CD8-positive, alpha-beta T cell (primary cell): ENCODE measurements at regions of chr6 and their contacts with region 1.

Region 1: GRCh38 chr6:14117158-14118090 is at the start of gene CD83:
- DNase-seq: peak; percentile 72 to 97 (median 84)
- ATAC-seq: peak; percentile 94
- H3K4me3 ChIP-seq: peak within 1 kb of the TSS; percentile 90 to 92
- H3K4me3 Mint-ChIP-seq: peak within 1 kb of the TSS; percentile 93
- H3K27ac ChIP-seq: peak within 1 kb of the TSS; percentile 66 to 81
- H3K27ac Mint-ChIP-seq: peak within 1 kb of the TSS; percentile 96
- H3K4me1 ChIP-seq: peaks cover 8% of the 10 kb centered on the region
- H3K4me1 Mint-ChIP-seq: peaks cover 39% of the 10 kb centered on the region
- H3K27me3 ChIP-seq: no peaks in the 10 kb centered on the region
- H3K27me3 Mint-ChIP-seq: no peaks in the 10 kb centered on the region
- CTCF ChIP-seq: no peak
- total RNA-seq, gene CD83: 57.2 to 60.4 TPM

Region 2: DNA sequence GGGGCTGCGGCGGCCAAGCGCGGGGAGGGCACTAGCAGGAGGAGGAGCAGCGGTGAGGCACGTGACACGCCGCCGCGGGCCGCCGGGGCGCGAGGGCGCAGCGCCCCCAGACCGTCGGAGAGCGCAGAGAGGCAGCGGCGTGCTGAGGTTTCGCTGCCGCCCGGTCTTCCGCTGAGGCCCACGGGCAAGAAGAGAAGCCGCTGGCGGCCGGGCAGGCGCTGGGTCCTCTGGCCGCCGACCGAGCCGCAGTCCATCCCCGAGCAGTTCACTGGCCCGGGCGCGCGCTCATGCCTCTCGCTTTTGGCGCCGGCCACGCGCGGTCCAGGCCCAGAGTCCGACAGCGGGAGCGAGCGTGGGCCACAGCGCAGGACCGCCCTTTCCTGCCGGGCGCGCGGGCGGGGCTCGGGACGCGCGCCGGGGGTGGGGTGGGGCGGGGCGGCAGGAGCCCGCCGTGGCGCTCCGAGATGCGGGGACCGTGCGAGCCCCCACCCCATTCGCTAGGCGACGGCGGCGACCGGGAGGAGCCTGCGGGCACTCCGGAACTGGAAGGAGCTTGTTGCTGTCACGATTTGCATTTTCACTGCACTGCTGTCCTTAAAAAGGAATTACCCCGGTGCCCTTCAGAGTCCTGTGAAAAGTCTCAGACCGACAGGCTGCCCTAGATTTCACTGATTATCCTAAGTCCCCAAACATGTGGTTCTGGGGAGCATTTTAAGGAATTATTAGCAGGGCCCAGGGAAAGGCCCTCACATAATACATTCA is 303.1 kb before region 1 on chr6 and contains the start of gene MCUR1:
- CTCF ChIA-PET with region 1: no interaction called
- POLR2A ChIA-PET with region 1: no interaction called
- intact Hi-C with region 1: loop called (anchors 1 to 2 kb)
- DNase-seq: peak; percentile 51 to 92 (median 74)
- ATAC-seq: peak; percentile 80
- H3K4me3 ChIP-seq: peak within 1 kb of the TSS; percentile 71
- H3K4me3 Mint-ChIP-seq: peak within 1 kb of the TSS; percentile 87
- H3K27ac ChIP-seq: peak within 1 kb of the TSS; percentile 61 to 76
- H3K27ac Mint-ChIP-seq: peak within 1 kb of the TSS; percentile 85
- H3K4me1 ChIP-seq: peaks cover 14% of the 10 kb centered on the region
- H3K4me1 Mint-ChIP-seq: peaks cover 34% of the 10 kb centered on the region
- H3K27me3 ChIP-seq: no peaks in the 10 kb centered on the region
- H3K27me3 Mint-ChIP-seq: no peaks in the 10 kb centered on the region
- CTCF ChIP-seq: no peak
- total RNA-seq, gene MCUR1: 2.1 to 3.4 TPM

Region 3: DNA sequence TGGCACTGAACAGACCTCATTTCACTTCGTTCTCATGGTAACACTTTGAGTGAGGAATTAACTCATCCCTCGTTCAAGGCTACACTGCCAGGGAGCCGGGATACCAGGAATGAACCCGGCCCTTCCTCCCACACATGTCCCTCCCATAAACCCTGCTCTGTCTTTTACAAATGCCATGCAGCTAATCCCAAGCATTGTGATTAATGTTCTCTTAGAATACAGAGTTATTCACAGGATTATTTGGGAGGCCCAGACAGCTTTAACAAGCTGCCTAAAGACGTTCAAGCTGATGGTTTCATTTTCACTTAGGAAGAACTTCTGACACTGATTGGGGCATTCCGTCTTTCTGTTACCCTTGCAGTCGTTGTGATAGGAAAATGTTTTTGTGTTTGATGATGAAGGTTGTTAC is 42.3 kb before region 1 on chr6:
- CTCF ChIA-PET with region 1: no interaction called
- POLR2A ChIA-PET with region 1: no interaction called
- intact Hi-C with region 1: loop called in 1 of 2 experiments (anchors 5 kb)
- DNase-seq: peak in 3 of 9 experiments; percentile 54 to 85 (median 70)
- ATAC-seq: peak; percentile 94
- H3K4me3 ChIP-seq: peak overlapping the region; percentile 41 to 45
- H3K4me3 Mint-ChIP-seq: peak overlapping the region; percentile 82
- H3K27ac ChIP-seq: peak overlapping the region; percentile 51 to 80
- H3K27ac Mint-ChIP-seq: peak overlapping the region; percentile 94
- H3K4me1 ChIP-seq: peaks cover 10% of the 10 kb centered on the region
- H3K4me1 Mint-ChIP-seq: peaks cover 22% of the 10 kb centered on the region
- H3K27me3 ChIP-seq: no peaks in the 10 kb centered on the region
- H3K27me3 Mint-ChIP-seq: no peaks in the 10 kb centered on the region
- CTCF ChIP-seq: no peak

Region 4: DNA sequence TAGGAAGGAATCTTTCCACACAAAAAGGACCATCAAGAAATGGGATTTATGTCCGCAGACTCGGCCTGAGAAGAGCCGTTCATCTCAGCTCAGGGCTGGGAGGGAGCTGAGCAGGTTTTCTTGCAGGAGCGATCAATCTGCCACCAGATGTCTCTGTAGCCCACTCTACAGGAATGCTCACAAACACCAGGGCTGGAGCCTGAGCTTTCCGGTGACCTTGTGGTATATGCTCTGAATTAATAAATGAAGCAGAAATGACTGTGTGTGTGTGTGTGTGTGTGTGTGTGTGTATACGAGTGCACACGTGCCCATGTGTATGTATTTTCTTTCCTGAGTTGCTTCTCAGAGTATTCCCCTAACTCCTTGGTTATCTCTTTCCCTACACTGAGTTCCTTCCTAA is 12.2 kb after region 1 on chr6:
- CTCF ChIA-PET with region 1: interaction called, 10 read pairs
- POLR2A ChIA-PET with region 1: interaction called, 5 read pairs
- intact Hi-C with region 1: no loop called
- DNase-seq: peak in 7 of 9 experiments; percentile 11 to 66 (median 38)
- ATAC-seq: peak; percentile 55
- H3K4me3 ChIP-seq: no peak overlapping the region
- H3K4me3 Mint-ChIP-seq: no peak overlapping the region
- H3K27ac ChIP-seq: no peak overlapping the region
- H3K27ac Mint-ChIP-seq: no peak overlapping the region
- H3K4me1 ChIP-seq: no peaks in the 10 kb centered on the region
- H3K4me1 Mint-ChIP-seq: peaks cover 11% of the 10 kb centered on the region
- H3K27me3 ChIP-seq: no peaks in the 10 kb centered on the region
- H3K27me3 Mint-ChIP-seq: no peaks in the 10 kb centered on the region
- CTCF ChIP-seq: no peak

Region 5: GRCh38 chr6:15254070-15254841 is 1136.8 kb after region 1 on chr6:
- CTCF ChIA-PET with region 1: no interaction called
- POLR2A ChIA-PET with region 1: no interaction called
- intact Hi-C with region 1: loop called in 1 of 2 experiments (anchors 5 kb)
- DNase-seq: peak in 1 of 9 experiments; percentile 39
- ATAC-seq: no peak
- H3K4me3 ChIP-seq: no peak overlapping the region
- H3K4me3 Mint-ChIP-seq: no peak overlapping the region
- H3K27ac ChIP-seq: peak overlapping the region in 1 of 2 experiments; percentile 20
- H3K27ac Mint-ChIP-seq: peak overlapping the region; percentile 71
- H3K4me1 ChIP-seq: peaks cover 72% of the 10 kb centered on the region
- H3K4me1 Mint-ChIP-seq: peaks cover 94% of the 10 kb centered on the region
- H3K27me3 ChIP-seq: no peaks in the 10 kb centered on the region
- H3K27me3 Mint-ChIP-seq: no peaks in the 10 kb centered on the region
- CTCF ChIP-seq: no peak

Region 6: DNA sequence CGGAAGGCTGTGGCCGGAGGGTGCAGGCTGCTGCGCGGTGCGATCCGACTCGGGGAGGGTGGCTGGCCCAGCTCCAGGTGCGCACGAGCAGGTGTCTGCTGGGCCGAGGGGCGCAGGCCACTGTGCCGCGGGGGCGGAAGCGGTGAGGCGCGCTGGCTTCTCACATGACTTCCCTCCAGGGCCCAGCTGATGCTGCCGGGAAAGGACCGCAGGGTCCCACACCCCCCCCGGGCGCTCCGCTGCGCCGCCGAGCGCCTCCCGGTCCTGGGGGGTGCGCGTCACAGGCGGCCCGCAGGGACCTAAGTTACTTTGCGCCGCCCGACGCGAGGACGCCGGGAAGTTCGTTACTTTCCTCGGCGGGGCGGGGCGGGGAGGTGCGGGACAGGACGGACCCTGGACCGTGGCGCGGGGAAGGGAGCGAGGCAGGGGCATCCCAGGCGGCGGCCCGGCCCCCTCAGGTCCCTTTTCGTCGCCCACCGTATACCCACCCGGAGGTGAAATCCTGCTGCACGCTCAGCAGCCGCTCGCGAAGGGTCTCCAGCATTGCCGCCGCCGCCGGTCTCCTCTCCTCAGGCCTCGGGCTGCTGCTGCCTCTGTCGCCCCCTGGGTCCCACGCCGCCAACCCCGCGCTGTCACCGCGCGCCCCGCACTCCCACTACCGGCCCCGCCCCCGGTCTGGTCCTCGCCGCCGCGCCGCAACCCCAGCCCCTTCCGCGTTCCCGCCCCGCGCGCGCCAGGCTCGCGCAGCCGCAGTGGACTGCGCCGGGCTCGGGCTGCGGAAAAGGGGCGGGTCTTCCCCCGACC is 1545.1 kb after region 1 on chr6 and contains the start of gene DTNBP1:
- CTCF ChIA-PET with region 1: no interaction called
- POLR2A ChIA-PET with region 1: no interaction called
- intact Hi-C with region 1: loop called in 1 of 2 experiments (anchors 1 kb)
- DNase-seq: peak; percentile 58 to 90 (median 82)
- ATAC-seq: peak; percentile 73
- H3K4me3 ChIP-seq: peak within 1 kb of the TSS; percentile 67 to 76
- H3K4me3 Mint-ChIP-seq: peak within 1 kb of the TSS; percentile 83
- H3K27ac ChIP-seq: peak within 1 kb of the TSS; percentile 55 to 73
- H3K27ac Mint-ChIP-seq: peak within 1 kb of the TSS; percentile 73
- H3K4me1 ChIP-seq: peaks cover 7% of the 10 kb centered on the region
- H3K4me1 Mint-ChIP-seq: peaks cover 41% of the 10 kb centered on the region
- H3K27me3 ChIP-seq: no peaks in the 10 kb centered on the region
- H3K27me3 Mint-ChIP-seq: peaks cover 2% of the 10 kb centered on the region
- CTCF ChIP-seq: no peak
- total RNA-seq, gene DTNBP1: 12.3 to 12.6 TPM